Activated T-helper 2 cell treated with anti-CD3 and anti-CD28 coated beads, Interferon-gamma antibody, Interleukin-2, Interleukin-4, amounts not matched to agents 10 μg/mL and 5 μg/mL and 100 μg/mL, durations not matched to agents 14 hours and 24 hours and 36 hours (primary cell): ENCODE measurements at regions of chrX and their contacts with region 1.

Region 1: GRCh38 chrX:120499301-120500072 is 30.4 kb upstream of the LAMP2 start:
- DNase-seq: no peak
- H3K4me3 Mint-ChIP-seq: no peak overlapping the region
- H3K27ac Mint-ChIP-seq: no peak overlapping the region
- H3K4me1 Mint-ChIP-seq: peaks cover 5% of the 10 kb centered on the region
- H3K27me3 Mint-ChIP-seq: peaks cover 3% of the 10 kb centered on the region

Region 2: DNA sequence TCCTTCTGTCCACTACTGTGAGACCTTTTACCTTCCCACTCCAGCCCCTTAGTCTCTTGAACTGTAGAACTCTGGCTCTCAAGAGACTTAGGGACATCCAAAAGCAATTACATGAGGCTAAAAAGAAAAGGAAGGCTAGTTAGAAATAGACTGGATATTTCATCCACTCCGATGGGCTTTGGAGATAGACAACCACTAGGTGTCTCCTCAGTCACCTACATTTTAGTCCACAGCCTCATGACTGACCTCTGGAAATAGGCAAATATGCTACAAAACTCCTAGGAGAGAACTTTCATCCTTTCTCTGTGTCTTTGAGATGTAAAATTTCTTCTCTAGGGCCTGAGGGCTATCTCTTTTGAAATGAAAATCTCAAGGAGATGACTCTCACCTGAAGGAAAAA is 14.7 kb after region 1 on chrX:
- intact Hi-C with region 1: no loop called
- DNase-seq: no peak
- H3K4me3 Mint-ChIP-seq: no peak overlapping the region
- H3K27ac Mint-ChIP-seq: no peak overlapping the region
- H3K4me1 Mint-ChIP-seq: no peaks in the 10 kb centered on the region
- H3K27me3 Mint-ChIP-seq: no peaks in the 10 kb centered on the region

Region 3: DNA sequence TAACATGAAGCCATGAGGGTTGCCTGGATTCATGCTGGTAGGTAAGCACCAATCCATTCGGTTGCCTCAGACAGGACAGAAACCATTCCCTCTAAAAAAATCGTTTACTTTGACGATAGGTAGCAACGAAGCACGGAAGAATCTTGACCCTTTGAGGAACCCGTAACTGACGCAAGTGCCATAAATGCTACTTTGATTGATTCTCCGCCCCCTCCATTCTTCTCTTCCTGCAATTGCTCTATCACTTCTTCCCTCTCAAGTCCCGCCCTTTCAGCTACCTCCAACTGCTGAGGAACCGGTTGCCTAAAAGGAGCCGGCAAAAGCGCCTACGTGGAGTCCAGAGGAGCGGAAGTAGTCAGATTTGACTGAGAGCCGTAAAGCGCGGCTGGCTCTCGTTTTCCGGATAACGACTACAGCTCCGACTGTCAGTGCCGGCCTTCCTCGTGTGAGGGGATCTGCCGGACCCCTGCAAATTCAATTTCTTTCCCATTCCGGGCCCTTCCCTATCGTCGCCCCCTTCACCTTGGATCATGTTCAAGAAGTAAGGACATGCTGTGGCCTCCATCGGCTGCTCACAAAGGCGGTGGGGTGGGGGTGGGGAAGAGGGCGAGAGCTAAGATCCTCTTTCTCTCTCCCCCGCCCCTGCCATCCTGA is 104.3 kb after region 1 on chrX and contains the start of gene MCTS1:
- intact Hi-C with region 1: loop called (anchors 5 kb)
- DNase-seq: peak; percentile 79
- H3K4me3 Mint-ChIP-seq: peak within 1 kb of the TSS; percentile 97
- H3K27ac Mint-ChIP-seq: peak within 1 kb of the TSS; percentile 98
- H3K4me1 Mint-ChIP-seq: peaks cover 9% of the 10 kb centered on the region
- H3K27me3 Mint-ChIP-seq: peaks cover 3% of the 10 kb centered on the region
- total RNA-seq, gene MCTS1: 66.3 and 68.7 TPM in 2 replicates

Region 4: DNA sequence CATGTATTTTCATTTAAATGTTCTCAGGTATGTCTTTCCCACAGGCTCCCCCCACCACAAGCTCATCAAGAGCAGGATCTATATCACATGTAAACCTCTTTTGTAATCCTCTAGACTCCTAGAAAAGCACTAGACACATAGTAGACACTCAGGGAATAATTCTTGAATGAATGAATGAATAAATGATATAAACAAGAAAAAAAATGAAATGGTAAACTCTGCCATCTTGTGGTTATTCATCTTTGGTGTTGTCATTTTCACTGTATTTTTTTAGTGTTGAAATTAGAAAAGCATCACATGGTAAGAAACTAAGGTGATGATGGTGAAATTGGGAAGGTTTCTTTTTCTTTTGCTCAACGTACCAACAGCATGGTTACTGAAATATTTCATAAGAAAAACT is 164.6 kb after region 1 on chrX:
- intact Hi-C with region 1: loop called (anchors 1 kb)
- DNase-seq: no peak
- H3K4me3 Mint-ChIP-seq: no peak overlapping the region
- H3K27ac Mint-ChIP-seq: no peak overlapping the region
- H3K4me1 Mint-ChIP-seq: peaks cover 3% of the 10 kb centered on the region
- H3K27me3 Mint-ChIP-seq: no peaks in the 10 kb centered on the region

Region 5: GRCh38 chrX:120769576-120770341 is 270.3 kb after region 1 on chrX:
- intact Hi-C with region 1: loop called (anchors 1 kb)
- DNase-seq: no peak
- H3K4me3 Mint-ChIP-seq: no peak overlapping the region
- H3K27ac Mint-ChIP-seq: no peak overlapping the region
- H3K4me1 Mint-ChIP-seq: peaks cover 5% of the 10 kb centered on the region
- H3K27me3 Mint-ChIP-seq: no peaks in the 10 kb centered on the region

Region 6: GRCh38 chrX:121666171-121666570 is 1166.7 kb after region 1 on chrX:
- intact Hi-C with region 1: no loop called
- DNase-seq: no peak
- H3K4me3 Mint-ChIP-seq: no peak overlapping the region
- H3K27ac Mint-ChIP-seq: no peak overlapping the region
- H3K4me1 Mint-ChIP-seq: no peaks in the 10 kb centered on the region
- H3K27me3 Mint-ChIP-seq: no peaks in the 10 kb centered on the region